CD4-positive, alpha-beta memory T cell (primary cell): ENCODE measurements at regions of chr1 and their contacts with region 1.

Region 1: DNA sequence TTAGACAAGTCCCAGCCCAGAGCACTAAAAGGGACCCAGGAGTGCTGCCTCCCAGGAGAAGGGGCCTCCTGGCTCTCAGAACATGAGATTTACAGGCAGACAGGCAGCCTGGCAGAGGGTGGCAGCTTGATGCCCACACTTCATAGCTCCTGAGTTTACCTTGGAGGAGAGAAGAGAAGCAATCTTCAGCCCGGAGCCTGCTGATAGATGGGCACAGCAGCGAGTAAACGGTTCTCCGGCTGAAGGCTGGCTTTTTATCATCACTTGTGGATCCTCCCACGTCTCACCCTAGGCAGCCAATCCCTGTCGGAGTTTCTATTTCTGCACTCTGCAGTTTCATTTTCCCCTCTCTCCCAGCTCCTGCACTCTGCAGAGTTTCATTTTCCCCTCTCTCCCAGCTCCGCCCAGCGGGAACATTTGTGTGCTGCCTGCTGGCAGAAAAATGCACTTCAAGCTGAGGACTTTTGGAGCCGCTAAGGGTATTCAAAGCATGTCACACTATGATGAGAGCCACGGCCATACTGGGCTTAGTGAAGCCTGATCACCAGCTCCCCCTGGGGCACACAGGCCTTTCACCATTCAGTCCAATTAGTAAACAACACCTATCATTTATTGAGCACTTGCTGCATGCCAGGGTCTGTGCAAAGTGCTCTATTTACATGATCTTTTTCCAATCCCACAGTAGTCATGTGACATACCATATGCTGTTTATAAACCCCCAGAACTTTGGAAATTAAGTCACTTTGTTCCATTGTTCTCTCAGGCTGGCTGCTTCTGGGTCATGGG is at the start of gene IFI6:
- DNase-seq: peak; percentile 82 to 92 (median 82)
- H3K4me3 ChIP-seq: peak within 1 kb of the TSS; percentile 63 to 65
- H3K4me3 Mint-ChIP-seq: peak within 1 kb of the TSS; percentile 91 to 99 (median 96)
- H3K27ac ChIP-seq: peak within 1 kb of the TSS; percentile 85
- H3K27ac Mint-ChIP-seq: peak within 1 kb of the TSS; percentile 90 to 99 (median 97)
- H3K4me1 ChIP-seq: peaks cover 41% of the 10 kb centered on the region
- H3K4me1 Mint-ChIP-seq: peaks cover 24 to 40% (median 33%) of the 10 kb centered on the region in 4 donors
- H3K27me3 ChIP-seq: no peaks in the 10 kb centered on the region
- H3K27me3 Mint-ChIP-seq: no peaks in the 10 kb centered on the region
- total RNA-seq, gene IFI6: 23.0 to 24.9 TPM

Region 2: GRCh38 chr1:27087371-27088220 is 584.6 kb before region 1 on chr1:
- CTCF ChIA-PET with region 1: no interaction called
- POLR2A ChIA-PET with region 1: no interaction called
- intact Hi-C with region 1: no loop called
- DNase-seq: no peak
- H3K4me3 ChIP-seq: no peak overlapping the region
- H3K4me3 Mint-ChIP-seq: no peak overlapping the region
- H3K27ac ChIP-seq: no peak overlapping the region
- H3K27ac Mint-ChIP-seq: no peak overlapping the region
- H3K4me1 ChIP-seq: no peaks in the 10 kb centered on the region
- H3K4me1 Mint-ChIP-seq: peaks cover 0 to 10% (median 3%) of the 10 kb centered on the region in 4 donors
- H3K27me3 ChIP-seq: no peaks in the 10 kb centered on the region
- H3K27me3 Mint-ChIP-seq: no peaks in the 10 kb centered on the region

Region 3: GRCh38 chr1:27536767-27537166 is 135.4 kb before region 1 on chr1:
- CTCF ChIA-PET with region 1: no interaction called
- POLR2A ChIA-PET with region 1: no interaction called
- intact Hi-C with region 1: no loop called
- DNase-seq: peak in 1 of 5 donors; percentile 15
- H3K4me3 ChIP-seq: no peak overlapping the region
- H3K4me3 Mint-ChIP-seq: no peak overlapping the region
- H3K27ac ChIP-seq: no peak overlapping the region
- H3K27ac Mint-ChIP-seq: no peak overlapping the region
- H3K4me1 ChIP-seq: peaks cover 8% of the 10 kb centered on the region
- H3K4me1 Mint-ChIP-seq: peaks cover 5 to 28% (median 11%) of the 10 kb centered on the region in 4 donors
- H3K27me3 ChIP-seq: no peaks in the 10 kb centered on the region
- H3K27me3 Mint-ChIP-seq: no peaks in the 10 kb centered on the region

Region 4: DNA sequence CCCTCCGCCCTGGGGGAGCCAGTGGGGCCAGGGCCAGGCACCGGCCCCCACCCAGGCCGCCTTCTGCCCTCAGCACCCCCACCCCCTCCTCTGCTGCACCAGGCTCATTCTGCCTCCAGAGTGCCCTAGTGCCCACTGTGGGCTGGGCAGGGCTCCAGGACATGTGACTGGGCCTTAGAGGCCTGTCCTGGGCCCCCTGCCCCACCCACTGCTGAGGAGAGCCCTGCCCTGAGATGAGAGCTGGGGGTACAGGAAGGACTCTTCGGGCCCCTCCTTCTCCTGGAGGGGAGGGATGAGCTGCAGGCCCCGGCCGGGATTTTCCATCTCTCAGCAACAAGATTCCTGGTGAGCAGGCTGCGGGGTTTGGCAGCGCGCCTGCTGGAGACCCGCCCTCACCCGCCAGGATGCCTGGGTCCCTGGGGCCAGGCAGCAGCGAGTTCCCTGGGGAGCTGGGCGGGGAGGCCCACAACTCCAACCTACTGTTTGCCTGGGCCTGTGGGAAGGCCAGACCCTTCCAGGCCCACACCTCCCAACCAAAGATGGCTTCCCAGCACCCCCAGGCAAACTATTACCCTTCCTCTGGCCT is 82.2 kb before region 1 on chr1:
- CTCF ChIA-PET with region 1: no interaction called
- POLR2A ChIA-PET with region 1: no interaction called
- intact Hi-C with region 1: no loop called
- DNase-seq: no peak
- H3K4me3 ChIP-seq: no peak overlapping the region
- H3K4me3 Mint-ChIP-seq: no peak overlapping the region
- H3K27ac ChIP-seq: no peak overlapping the region
- H3K27ac Mint-ChIP-seq: no peak overlapping the region
- H3K4me1 ChIP-seq: peaks cover 13% of the 10 kb centered on the region
- H3K4me1 Mint-ChIP-seq: no peaks in the 10 kb centered on the region
- H3K27me3 ChIP-seq: no peaks in the 10 kb centered on the region
- H3K27me3 Mint-ChIP-seq: no peaks in the 10 kb centered on the region

Region 5: DNA sequence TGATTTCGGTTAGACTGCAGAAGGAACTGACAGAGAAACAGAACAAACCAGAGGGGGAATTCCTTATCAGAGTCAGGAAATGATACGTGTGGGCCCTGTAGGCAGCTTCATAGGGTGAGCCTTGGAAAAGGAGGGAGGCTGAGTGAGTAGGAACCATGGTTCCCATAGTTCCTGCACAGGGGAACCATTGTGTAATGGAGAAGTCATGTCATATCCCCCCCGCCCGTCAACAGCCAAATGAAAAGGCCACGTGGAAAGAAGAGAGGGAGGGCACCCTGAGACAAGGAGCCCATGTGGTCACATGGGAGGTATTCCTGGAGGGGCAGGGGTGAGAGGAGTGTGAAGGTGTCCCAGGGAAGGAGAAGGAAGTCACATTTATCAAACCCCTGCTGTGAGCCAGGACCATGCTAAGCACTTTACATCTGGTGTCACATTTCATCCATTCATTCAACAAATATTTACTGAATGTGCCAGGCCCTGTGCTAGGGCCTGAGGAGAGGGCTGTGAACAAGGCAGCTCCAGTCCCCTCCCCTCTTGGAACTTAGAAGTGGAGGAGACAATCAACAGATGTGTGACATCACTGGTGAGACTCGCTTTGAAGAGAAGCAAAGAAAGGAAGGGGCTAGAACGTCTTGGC is 21.5 kb before region 1 on chr1:
- CTCF ChIA-PET with region 1: interaction called, 10 read pairs
- POLR2A ChIA-PET with region 1: no interaction called
- intact Hi-C with region 1: no loop called
- DNase-seq: no peak
- H3K4me3 ChIP-seq: no peak overlapping the region
- H3K4me3 Mint-ChIP-seq: no peak overlapping the region
- H3K27ac ChIP-seq: no peak overlapping the region
- H3K27ac Mint-ChIP-seq: peak overlapping the region in 5 of 7 donors; percentile 10 to 79 (median 25)
- H3K4me1 ChIP-seq: peaks cover 8% of the 10 kb centered on the region
- H3K4me1 Mint-ChIP-seq: peaks cover 5 to 14% (median 10%) of the 10 kb centered on the region in 4 donors
- H3K27me3 ChIP-seq: no peaks in the 10 kb centered on the region
- H3K27me3 Mint-ChIP-seq: no peaks in the 10 kb centered on the region

Region 6: GRCh38 chr1:27719286-27720251 is 47.4 kb after region 1 on chr1:
- CTCF ChIA-PET with region 1: interaction called, 12 read pairs
- POLR2A ChIA-PET with region 1: interaction called, 25 read pairs
- intact Hi-C with region 1: loop called (anchors 1 kb)
- DNase-seq: peak in 3 of 5 donors; percentile 7 to 19 (median 11)
- H3K4me3 ChIP-seq: no peak overlapping the region
- H3K4me3 Mint-ChIP-seq: no peak overlapping the region
- H3K27ac ChIP-seq: no peak overlapping the region
- H3K27ac Mint-ChIP-seq: peak overlapping the region in 2 of 7 donors; percentile 38 to 43
- H3K4me1 ChIP-seq: no peaks in the 10 kb centered on the region
- H3K4me1 Mint-ChIP-seq: peaks cover 0 to 2% (median 0%) of the 10 kb centered on the region in 4 donors
- H3K27me3 ChIP-seq: no peaks in the 10 kb centered on the region
- H3K27me3 Mint-ChIP-seq: peaks cover 18 to 20% of the 10 kb centered on the region in 2 donors

Region 7: DNA sequence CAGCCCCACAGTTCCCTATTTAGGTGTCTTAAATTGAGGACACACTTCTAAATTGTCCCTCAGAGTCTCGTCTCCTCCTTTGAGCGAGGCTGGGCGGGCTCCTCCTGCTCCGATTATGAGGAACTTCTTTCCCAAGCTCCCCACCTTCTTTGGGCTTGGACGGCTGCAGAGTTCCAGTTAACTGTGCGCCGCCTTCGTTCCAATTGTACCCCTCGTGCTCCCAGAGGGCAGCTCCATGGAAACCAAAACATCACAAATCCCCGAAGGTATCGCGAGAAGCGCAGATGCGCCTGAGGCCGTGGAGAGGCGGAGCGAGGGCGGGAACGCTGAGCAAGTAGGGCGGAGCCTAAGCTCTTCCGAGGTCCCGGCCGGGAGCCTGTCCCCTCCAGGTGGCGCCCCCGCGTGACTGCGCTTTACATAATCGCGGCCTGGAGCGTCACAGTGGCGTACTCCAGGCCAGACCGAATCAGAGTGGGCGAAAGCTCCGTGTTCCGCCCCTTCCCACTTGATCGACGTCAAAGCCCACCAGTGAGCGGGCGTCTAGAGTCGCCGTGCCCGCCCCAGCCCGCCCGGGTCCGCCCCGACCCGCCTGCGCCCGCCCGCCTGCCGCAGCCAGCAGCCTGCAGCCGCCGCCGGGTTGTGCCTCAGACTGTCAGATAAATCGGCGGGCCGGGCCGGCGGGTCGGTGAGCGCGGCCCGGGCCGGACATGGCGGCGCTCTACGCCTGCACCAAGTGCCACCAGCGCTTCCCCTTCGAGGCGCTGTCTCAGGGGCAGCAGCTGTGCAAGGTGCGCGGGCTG is 53.4 kb after region 1 on chr1 and contains the start of gene FAM76A:
- CTCF ChIA-PET with region 1: interaction called, 23 read pairs
- POLR2A ChIA-PET with region 1: interaction called, 28 read pairs
- intact Hi-C with region 1: loop called (anchors 1 kb)
- DNase-seq: peak; percentile 99 to 100 (median 99)
- H3K4me3 ChIP-seq: peak within 1 kb of the TSS; percentile 38 to 91
- H3K4me3 Mint-ChIP-seq: peak within 1 kb of the TSS; percentile 83 to 91 (median 88)
- H3K27ac ChIP-seq: peak within 1 kb of the TSS; percentile 90
- H3K27ac Mint-ChIP-seq: peak within 1 kb of the TSS; percentile 96 to 100 (median 99)
- H3K4me1 ChIP-seq: peaks cover 16% of the 10 kb centered on the region
- H3K4me1 Mint-ChIP-seq: peaks cover 11 to 38% (median 24%) of the 10 kb centered on the region in 4 donors
- H3K27me3 ChIP-seq: no peaks in the 10 kb centered on the region
- H3K27me3 Mint-ChIP-seq: no peaks in the 10 kb centered on the region
- total RNA-seq, gene FAM76A: 22.8 to 26.0 TPM

Region 8: GRCh38 chr1:27772933-27773825 is 101.0 kb after region 1 on chr1 and contains the start of gene STX12:
- CTCF ChIA-PET with region 1: interaction called, 19 read pairs
- POLR2A ChIA-PET with region 1: interaction called, 11 read pairs
- intact Hi-C with region 1: loop called (anchors 1 kb)
- DNase-seq: peak; percentile 98 to 100 (median 98)
- H3K4me3 ChIP-seq: peak within 1 kb of the TSS; percentile 80 to 96
- H3K4me3 Mint-ChIP-seq: peak within 1 kb of the TSS; percentile 91 to 98 (median 97)
- H3K27ac ChIP-seq: peak within 1 kb of the TSS; percentile 87
- H3K27ac Mint-ChIP-seq: peak within 1 kb of the TSS; percentile 86 to 99 (median 99)
- H3K4me1 ChIP-seq: peaks cover 32% of the 10 kb centered on the region
- H3K4me1 Mint-ChIP-seq: peaks cover 27 to 39% (median 29%) of the 10 kb centered on the region in 4 donors
- H3K27me3 ChIP-seq: no peaks in the 10 kb centered on the region
- H3K27me3 Mint-ChIP-seq: no peaks in the 10 kb centered on the region
- total RNA-seq, gene STX12: 25.2 to 27.5 TPM

Region 9: GRCh38 chr1:27830621-27831424 is 158.7 kb after region 1 on chr1 and contains the start of gene PPP1R8:
- CTCF ChIA-PET with region 1: interaction called, 5 read pairs
- POLR2A ChIA-PET with region 1: interaction called, 9 read pairs
- intact Hi-C with region 1: loop called (anchors 2 kb)
- DNase-seq: peak; percentile 83 to 90 (median 86)
- H3K4me3 ChIP-seq: peak within 1 kb of the TSS; percentile 76 to 84
- H3K4me3 Mint-ChIP-seq: peak within 1 kb of the TSS; percentile 93 to 97 (median 94)
- H3K27ac ChIP-seq: peak within 1 kb of the TSS; percentile 73
- H3K27ac Mint-ChIP-seq: peak within 1 kb of the TSS; percentile 91 to 97 (median 93)
- H3K4me1 ChIP-seq: peaks cover 44% of the 10 kb centered on the region
- H3K4me1 Mint-ChIP-seq: peaks cover 21 to 46% (median 31%) of the 10 kb centered on the region in 4 donors
- H3K27me3 ChIP-seq: no peaks in the 10 kb centered on the region
- H3K27me3 Mint-ChIP-seq: no peaks in the 10 kb centered on the region
- total RNA-seq, gene PPP1R8: 40.8 to 45.8 TPM